ENCODE measurements at regions of chr15 and their contacts with region 1.

Region 1: GRCh38 chr15:39961051-39961450 is 27.1 kb downstream of the EIF2AK4 start:
- DNase-seq: no peak
- H3K4me3 ChIP-seq: no peak overlapping the region
- H3K4me3 Mint-ChIP-seq: no peak overlapping the region
- H3K27ac Mint-ChIP-seq: no peak overlapping the region
- H3K4me1 ChIP-seq: no peaks in the 10 kb centered on the region
- H3K4me1 Mint-ChIP-seq: no peaks in the 10 kb centered on the region
- H3K27me3 ChIP-seq: no peaks in the 10 kb centered on the region
- H3K27me3 Mint-ChIP-seq: no peaks in the 10 kb centered on the region
- CTCF ChIP-seq: no peak

Region 2: DNA sequence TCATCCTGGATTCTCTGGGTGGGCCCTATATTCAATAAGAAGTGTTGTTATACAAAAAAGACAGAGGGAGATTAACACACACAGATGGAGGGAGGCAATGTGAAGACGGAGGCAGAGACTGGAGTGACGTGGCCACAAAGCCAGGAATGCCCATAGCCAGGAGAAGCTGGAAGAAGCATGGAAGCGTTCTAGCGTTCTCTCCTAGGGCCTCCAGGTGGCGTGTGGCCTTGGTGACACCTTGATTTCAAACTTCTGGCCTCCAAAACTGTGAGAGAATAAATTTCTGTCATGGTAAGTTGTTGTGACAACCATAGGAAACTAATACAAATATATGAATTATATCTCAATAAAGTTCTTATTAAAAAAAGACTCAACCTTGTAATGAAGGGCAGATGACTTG is 358.9 kb before region 1 on chr15:
- CTCF ChIA-PET with region 1: interaction called, 13 read pairs
- POLR2A ChIA-PET with region 1: no interaction called
- intact Hi-C with region 1: no loop called
- DNase-seq: peak in 1 of 2 experiments; percentile 47
- H3K4me3 ChIP-seq: no peak overlapping the region
- H3K4me3 Mint-ChIP-seq: no peak overlapping the region
- H3K27ac Mint-ChIP-seq: no peak overlapping the region
- H3K4me1 ChIP-seq: peaks cover 8% of the 10 kb centered on the region; the same call in 1 of the 2 replicates
- H3K4me1 Mint-ChIP-seq: peaks cover 18% of the 10 kb centered on the region
- H3K27me3 ChIP-seq: no peaks in the 10 kb centered on the region
- H3K27me3 Mint-ChIP-seq: no peaks in the 10 kb centered on the region
- CTCF ChIP-seq: peak; percentile 32 to 45

Region 3: GRCh38 chr15:39920510-39921273 is 40.4 kb before region 1 on chr15:
- CTCF ChIA-PET with region 1: no interaction called
- POLR2A ChIA-PET with region 1: no interaction called
- intact Hi-C with region 1: no loop called
- DNase-seq: peak; percentile 66 to 85
- H3K4me3 ChIP-seq: peak overlapping the region; percentile 88
- H3K4me3 Mint-ChIP-seq: peak overlapping the region; percentile 90
- H3K27ac Mint-ChIP-seq: peak overlapping the region; percentile 80
- H3K4me1 ChIP-seq: peaks cover 23% of the 10 kb centered on the region
- H3K4me1 Mint-ChIP-seq: peaks cover 27% of the 10 kb centered on the region
- H3K27me3 ChIP-seq: no peaks in the 10 kb centered on the region
- H3K27me3 Mint-ChIP-seq: no peaks in the 10 kb centered on the region
- CTCF ChIP-seq: no peak

Region 4: GRCh38 chr15:40069178-40070165 is 108.4 kb after region 1 on chr15:
- CTCF ChIA-PET with region 1: no interaction called
- POLR2A ChIA-PET with region 1: no interaction called
- intact Hi-C with region 1: no loop called
- DNase-seq: no peak
- H3K4me3 ChIP-seq: no peak overlapping the region
- H3K4me3 Mint-ChIP-seq: no peak overlapping the region
- H3K27ac Mint-ChIP-seq: no peak overlapping the region
- H3K4me1 ChIP-seq: no peaks in the 10 kb centered on the region
- H3K4me1 Mint-ChIP-seq: no peaks in the 10 kb centered on the region
- H3K27me3 ChIP-seq: no peaks in the 10 kb centered on the region
- H3K27me3 Mint-ChIP-seq: no peaks in the 10 kb centered on the region
- CTCF ChIP-seq: no peak